GM12878 (cell line): ENCODE measurements at regions of chr7 and their contacts with region 1.

Region 1: DNA sequence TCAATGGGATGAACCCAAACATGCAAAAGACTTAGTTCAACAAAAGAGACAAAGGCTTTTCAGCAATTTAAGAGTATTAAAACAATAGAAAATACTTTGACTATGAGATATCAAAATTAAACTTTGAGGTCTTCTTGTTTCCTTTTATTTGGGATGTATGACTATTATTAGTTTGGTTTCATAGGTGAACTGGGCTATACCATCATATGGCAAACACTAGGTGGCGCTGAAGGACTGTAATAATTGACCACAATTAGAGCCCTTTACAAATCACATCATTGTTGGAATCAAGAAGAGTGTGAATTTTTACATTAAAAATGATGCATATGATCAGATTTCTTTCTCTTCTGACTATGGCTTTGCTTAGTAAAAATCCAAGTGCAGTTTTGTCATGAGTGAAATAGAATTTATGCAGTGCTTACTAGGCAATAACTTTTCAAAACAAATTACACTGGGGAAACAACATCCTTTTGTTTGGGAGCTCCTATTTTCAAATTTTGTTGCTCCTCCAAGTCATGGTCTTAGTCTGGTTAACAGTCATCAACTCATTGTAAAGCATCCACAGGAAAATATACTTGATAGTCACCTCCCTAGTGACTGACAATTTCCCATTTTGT is 14.7 kb upstream of the NXPH1 start:
- DNase-seq: peak; percentile 19
- ATAC-seq: peak; percentile 91
- H3K4me3 ChIP-seq: no peak overlapping the region
- H3K27ac ChIP-seq: no peak overlapping the region
- H3K4me1 ChIP-seq: no peaks in the 10 kb centered on the region
- H3K27me3 ChIP-seq: no peaks in the 10 kb centered on the region; a peak in 1 of 4 replicates
- CTCF ChIP-seq: peak; percentile 60 to 72 (median 69); a peak in 5 of 6 replicates
- EP300 ChIP-seq: no peak
- POLR2A ChIP-seq: no peak
- RAD21 ChIP-seq: peak; percentile 73

Region 2: DNA sequence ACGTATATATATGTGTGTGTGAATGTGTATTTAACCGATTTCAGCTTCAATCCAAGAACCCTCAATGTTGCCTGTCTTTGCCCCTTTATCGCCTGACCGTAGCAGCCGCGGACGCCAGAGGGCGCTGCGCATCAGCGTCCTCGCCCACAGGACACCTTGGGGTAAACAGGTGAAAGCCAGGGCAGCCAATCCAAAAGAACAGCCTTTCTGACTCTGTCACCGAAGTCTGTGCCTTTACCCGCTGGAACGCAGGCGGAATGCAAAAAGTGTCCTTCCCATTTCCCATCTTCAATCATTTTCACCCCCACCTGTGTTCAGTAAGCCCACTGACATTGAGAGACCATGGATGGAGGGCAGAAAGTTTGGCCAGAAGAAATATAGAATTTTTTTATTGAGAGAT is 18.2 kb after region 1 on chr7:
- CTCF ChIA-PET with region 1: interaction called, 11 read pairs
- POLR2A ChIA-PET with region 1: no interaction called
- RAD21 ChIA-PET with region 1: no interaction called
- SMC1A ChIA-PET with region 1: interaction called, 4 read pairs
- in situ Hi-C with region 1: no loop called
- intact Hi-C with region 1: no loop called
- DNase-seq: peak; percentile 4
- ATAC-seq: peak; percentile 96
- H3K4me3 ChIP-seq: no peak overlapping the region
- H3K27ac ChIP-seq: no peak overlapping the region
- H3K4me1 ChIP-seq: no peaks in the 10 kb centered on the region
- H3K27me3 ChIP-seq: peaks cover 19 to 28% of the 10 kb centered on the region in 2 experiments
- CTCF ChIP-seq: peak; percentile 81 to 94 (median 89)
- EP300 ChIP-seq: no peak
- POLR2A ChIP-seq: no peak
- RAD21 ChIP-seq: peak; percentile 70

Region 3: GRCh38 chr7:8724080-8724718 is 305.5 kb after region 1 on chr7:
- CTCF ChIA-PET with region 1: interaction called, 39 read pairs
- POLR2A ChIA-PET with region 1: no interaction called
- RAD21 ChIA-PET with region 1: no interaction called
- SMC1A ChIA-PET with region 1: interaction called, 16 read pairs
- in situ Hi-C with region 1: loop called (anchors 5 kb)
- intact Hi-C with region 1: loop called (anchors 1 kb)
- DNase-seq: no peak
- ATAC-seq: peak; percentile 92
- H3K4me3 ChIP-seq: no peak overlapping the region
- H3K27ac ChIP-seq: no peak overlapping the region
- H3K4me1 ChIP-seq: no peaks in the 10 kb centered on the region
- H3K27me3 ChIP-seq: no peaks in the 10 kb centered on the region
- CTCF ChIP-seq: peak; percentile 80 to 87 (median 80)
- EP300 ChIP-seq: no peak
- POLR2A ChIP-seq: no peak
- RAD21 ChIP-seq: peak; percentile 65

Region 4: DNA sequence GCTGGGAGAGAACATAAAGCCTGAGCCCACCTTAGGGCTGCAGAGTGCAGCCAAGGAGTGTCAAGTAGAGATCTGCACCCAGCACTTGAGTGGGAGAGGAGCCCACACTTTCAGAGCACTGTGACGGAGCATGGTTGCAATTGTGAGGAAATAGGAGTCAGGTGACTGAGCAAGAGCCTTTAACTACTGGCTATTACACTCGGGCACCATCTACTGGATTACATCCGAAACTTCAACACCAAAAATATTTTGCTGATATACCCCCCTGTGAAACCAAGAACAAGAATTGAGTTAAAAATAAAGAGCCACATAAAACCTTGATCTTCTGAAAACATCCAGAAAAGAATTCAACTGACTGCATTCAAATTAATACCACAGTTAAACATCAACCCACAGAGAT is 672.5 kb after region 1 on chr7:
- CTCF ChIA-PET with region 1: no interaction called
- POLR2A ChIA-PET with region 1: no interaction called
- RAD21 ChIA-PET with region 1: no interaction called
- SMC1A ChIA-PET with region 1: no interaction called
- in situ Hi-C with region 1: no loop called
- intact Hi-C with region 1: loop called (anchors 5 kb)
- DNase-seq: no peak
- ATAC-seq: peak; percentile 75
- H3K4me3 ChIP-seq: no peak overlapping the region
- H3K27ac ChIP-seq: no peak overlapping the region
- H3K4me1 ChIP-seq: no peaks in the 10 kb centered on the region
- H3K27me3 ChIP-seq: no peaks in the 10 kb centered on the region
- CTCF ChIP-seq: peak; percentile 7 to 30 (median 27); a peak in 2 of 6 replicates
- EP300 ChIP-seq: no peak
- POLR2A ChIP-seq: no peak
- RAD21 ChIP-seq: peak; percentile 68; the same call in 1 of the 2 replicates

Region 5: DNA sequence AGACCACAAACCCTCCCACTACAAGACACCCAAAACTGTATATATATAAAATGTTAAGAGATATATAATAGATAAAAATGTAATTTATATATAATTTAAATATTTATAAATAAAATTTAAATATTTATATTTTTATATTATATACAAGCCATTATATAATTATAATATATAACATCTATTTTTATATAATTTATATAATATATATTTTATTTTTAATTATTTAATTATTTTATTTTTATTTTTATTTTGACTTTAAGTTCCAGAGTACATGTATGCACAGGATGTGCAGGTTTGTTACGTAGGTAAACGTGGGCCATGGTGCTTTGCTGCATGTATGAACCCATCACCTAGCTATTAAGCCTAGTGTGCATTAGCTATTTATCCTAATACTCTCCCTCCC is 1104.8 kb after region 1 on chr7:
- CTCF ChIA-PET with region 1: no interaction called
- POLR2A ChIA-PET with region 1: no interaction called
- RAD21 ChIA-PET with region 1: no interaction called
- SMC1A ChIA-PET with region 1: no interaction called
- in situ Hi-C with region 1: no loop called
- intact Hi-C with region 1: no loop called
- DNase-seq: no peak
- ATAC-seq: no peak
- H3K4me3 ChIP-seq: no peak overlapping the region
- H3K27ac ChIP-seq: no peak overlapping the region
- H3K4me1 ChIP-seq: no peaks in the 10 kb centered on the region
- H3K27me3 ChIP-seq: no peaks in the 10 kb centered on the region
- CTCF ChIP-seq: no peak
- EP300 ChIP-seq: no peak
- POLR2A ChIP-seq: no peak
- RAD21 ChIP-seq: no peak

Region 6: GRCh38 chr7:10412422-10413019 is 1993.8 kb after region 1 on chr7:
- CTCF ChIA-PET with region 1: interaction called, 3 read pairs
- POLR2A ChIA-PET with region 1: no interaction called
- RAD21 ChIA-PET with region 1: interaction called, 4 read pairs
- SMC1A ChIA-PET with region 1: interaction called, 9 read pairs
- in situ Hi-C with region 1: loop called (anchors 10 kb)
- intact Hi-C with region 1: loop called (anchors 5 kb)
- DNase-seq: no peak
- ATAC-seq: peak; percentile 86
- H3K4me3 ChIP-seq: no peak overlapping the region
- H3K27ac ChIP-seq: no peak overlapping the region
- H3K4me1 ChIP-seq: no peaks in the 10 kb centered on the region
- H3K27me3 ChIP-seq: no peaks in the 10 kb centered on the region
- CTCF ChIP-seq: peak; percentile 35 to 63 (median 53)
- EP300 ChIP-seq: no peak
- POLR2A ChIP-seq: no peak
- RAD21 ChIP-seq: peak; percentile 68